Panc1 (cell line): ENCODE measurements at regions of chr5 and their contacts with region 1.

Region 1: GRCh38 chr5:10499776-10500175 is 58.1 kb downstream of the ROPN1L start:
- DNase-seq: no peak
- ATAC-seq: no peak
- H3K4me3 ChIP-seq: no peak overlapping the region
- H3K27ac ChIP-seq: no peak overlapping the region
- H3K4me1 ChIP-seq: peaks cover 11% of the 10 kb centered on the region; the same call in 1 of the 2 replicates
- H3K27me3 ChIP-seq: no peaks in the 10 kb centered on the region
- CTCF ChIP-seq: no peak

Region 2: GRCh38 chr5:10111571-10111970 is 388.2 kb before region 1 on chr5:
- CTCF ChIA-PET with region 1: no interaction called
- POLR2A ChIA-PET with region 1: no interaction called
- in situ Hi-C with region 1: no loop called
- intact Hi-C with region 1: no loop called
- DNase-seq: no peak
- ATAC-seq: peak; percentile 59; the same call in 1 of the 2 replicates
- H3K4me3 ChIP-seq: no peak overlapping the region
- H3K27ac ChIP-seq: no peak overlapping the region
- H3K4me1 ChIP-seq: no peaks in the 10 kb centered on the region
- H3K27me3 ChIP-seq: no peaks in the 10 kb centered on the region
- CTCF ChIP-seq: peak; percentile 64; the same call in 1 of the 2 replicates

Region 3: DNA sequence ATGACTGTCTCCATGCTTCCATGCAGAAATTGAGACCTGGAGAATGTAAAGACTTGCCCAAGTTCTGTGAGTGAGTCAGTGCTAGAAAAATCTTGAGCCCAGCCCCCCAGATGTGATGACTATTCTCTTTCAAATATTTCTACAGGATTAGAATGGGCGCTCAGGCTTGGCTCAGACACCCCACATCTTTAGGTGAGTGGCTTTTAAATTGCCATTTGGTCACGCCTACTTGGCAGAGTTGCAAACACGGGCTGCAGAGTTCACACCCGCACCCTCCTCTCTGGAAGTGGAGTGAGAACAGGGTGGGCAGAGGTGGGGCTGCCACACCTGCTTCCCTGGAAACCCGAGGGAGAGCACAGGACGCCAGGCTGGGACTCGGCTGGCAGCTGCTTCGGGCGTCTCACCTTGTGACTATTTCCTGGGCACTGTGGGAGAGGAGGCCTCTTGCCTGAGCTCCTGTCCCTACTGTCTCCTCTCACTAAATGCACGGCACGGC is 20.5 kb before region 1 on chr5:
- CTCF ChIA-PET with region 1: no interaction called
- POLR2A ChIA-PET with region 1: interaction called, 12 read pairs
- in situ Hi-C with region 1: no loop called
- intact Hi-C with region 1: no loop called
- DNase-seq: no peak
- ATAC-seq: no peak
- H3K4me3 ChIP-seq: no peak overlapping the region
- H3K27ac ChIP-seq: no peak overlapping the region
- H3K4me1 ChIP-seq: 0 out of 2 replicates have a peak, but pooled peaks cover 2% of the 10 kb centered on the region
- H3K27me3 ChIP-seq: no peaks in the 10 kb centered on the region
- CTCF ChIP-seq: no peak